Endothelial cell of umbilical vein (primary cell): ENCODE measurements at regions of chr6 and their contacts with region 1.

Region 1: DNA sequence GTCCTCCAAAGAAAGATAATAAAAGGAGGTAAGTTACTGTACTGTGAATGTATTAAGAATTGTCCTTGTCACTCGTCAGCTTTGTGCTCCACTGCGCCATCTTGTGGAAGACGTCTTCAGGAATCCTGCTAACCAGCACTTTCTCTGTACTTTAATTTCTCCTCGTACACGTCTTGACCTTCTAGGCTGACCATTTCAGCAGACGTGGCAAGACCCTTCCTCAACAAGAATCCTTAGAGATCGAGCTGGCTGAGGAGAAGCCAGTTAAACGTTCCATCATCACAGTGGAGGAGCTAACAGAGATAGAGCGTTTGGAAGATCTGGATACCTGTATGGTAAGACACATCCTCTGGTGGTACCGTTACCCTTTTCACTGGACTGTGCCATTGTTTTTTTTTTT is 95.5 kb upstream of the SCGN start:
- DNase-seq: peak; percentile 83
- H3K4me3 ChIP-seq: no peak overlapping the region
- H3K27ac ChIP-seq: no peak overlapping the region
- H3K4me1 ChIP-seq: no peaks in the 10 kb centered on the region
- H3K27me3 ChIP-seq: no peaks in the 10 kb centered on the region
- CTCF ChIP-seq: peak; percentile 73 to 85
- POLR2A ChIP-seq: no peak

Region 2: DNA sequence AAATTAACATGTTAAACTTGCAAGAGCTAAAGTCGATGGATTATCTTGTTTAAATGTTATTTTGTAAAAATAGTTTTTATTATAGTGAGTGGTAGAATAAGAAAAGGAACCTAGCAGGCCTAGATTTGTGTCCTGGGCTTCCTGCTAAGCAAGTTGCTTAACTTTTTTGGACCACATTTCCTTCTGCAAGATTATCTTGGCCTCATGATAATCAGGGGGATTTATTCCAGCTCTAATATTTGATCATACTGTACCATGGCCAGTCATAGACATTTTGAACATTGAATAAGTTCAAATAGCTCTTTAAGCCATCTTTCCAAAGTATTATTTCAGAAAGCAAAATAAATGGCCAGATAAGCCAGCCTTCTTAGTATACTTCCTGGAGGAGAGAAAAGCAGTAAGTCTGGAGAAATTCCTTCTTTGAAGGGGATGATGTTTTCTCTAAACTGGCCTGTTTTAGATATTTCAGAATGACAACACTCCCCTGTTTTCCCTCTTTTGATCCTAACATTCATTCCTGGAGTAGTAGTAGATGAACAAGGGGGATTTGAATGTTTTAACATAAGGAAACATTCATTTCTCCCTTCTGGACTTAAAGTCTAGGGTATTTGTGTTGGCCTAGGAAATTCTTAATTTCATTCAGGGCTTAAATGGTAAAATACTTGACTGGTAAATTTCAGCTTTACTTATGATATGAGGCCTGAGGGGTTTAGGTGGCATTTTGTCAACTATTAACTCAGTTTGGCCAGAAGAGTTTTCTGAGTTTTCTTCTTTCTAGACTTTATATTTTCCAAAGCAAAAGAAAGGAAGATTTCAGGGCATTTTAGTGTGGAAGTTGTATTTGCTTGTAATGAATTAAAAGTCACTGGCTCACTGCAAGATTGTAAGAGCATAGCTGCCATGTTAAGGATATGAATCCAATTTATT is 13.3 kb before region 1 on chr6:
- CTCF ChIA-PET with region 1: interaction called, 28 read pairs
- POLR2A ChIA-PET with region 1: no interaction called
- dilution Hi-C with region 1: no loop called
- intact Hi-C with region 1: no loop called
- DNase-seq: no peak
- H3K4me3 ChIP-seq: no peak overlapping the region
- H3K27ac ChIP-seq: no peak overlapping the region
- H3K4me1 ChIP-seq: no peaks in the 10 kb centered on the region
- H3K27me3 ChIP-seq: no peaks in the 10 kb centered on the region
- CTCF ChIP-seq: no peak
- POLR2A ChIP-seq: no peak

Region 3: GRCh38 chr6:25570578-25570977 is 14.1 kb after region 1 on chr6:
- CTCF ChIA-PET with region 1: interaction called, 62 read pairs
- POLR2A ChIA-PET with region 1: no interaction called
- dilution Hi-C with region 1: no loop called
- intact Hi-C with region 1: no loop called
- DNase-seq: peak; percentile 23
- H3K4me3 ChIP-seq: no peak overlapping the region
- H3K27ac ChIP-seq: no peak overlapping the region
- H3K4me1 ChIP-seq: peaks cover 10% of the 10 kb centered on the region
- H3K27me3 ChIP-seq: no peaks in the 10 kb centered on the region
- CTCF ChIP-seq: no peak
- POLR2A ChIP-seq: no peak

Region 4: DNA sequence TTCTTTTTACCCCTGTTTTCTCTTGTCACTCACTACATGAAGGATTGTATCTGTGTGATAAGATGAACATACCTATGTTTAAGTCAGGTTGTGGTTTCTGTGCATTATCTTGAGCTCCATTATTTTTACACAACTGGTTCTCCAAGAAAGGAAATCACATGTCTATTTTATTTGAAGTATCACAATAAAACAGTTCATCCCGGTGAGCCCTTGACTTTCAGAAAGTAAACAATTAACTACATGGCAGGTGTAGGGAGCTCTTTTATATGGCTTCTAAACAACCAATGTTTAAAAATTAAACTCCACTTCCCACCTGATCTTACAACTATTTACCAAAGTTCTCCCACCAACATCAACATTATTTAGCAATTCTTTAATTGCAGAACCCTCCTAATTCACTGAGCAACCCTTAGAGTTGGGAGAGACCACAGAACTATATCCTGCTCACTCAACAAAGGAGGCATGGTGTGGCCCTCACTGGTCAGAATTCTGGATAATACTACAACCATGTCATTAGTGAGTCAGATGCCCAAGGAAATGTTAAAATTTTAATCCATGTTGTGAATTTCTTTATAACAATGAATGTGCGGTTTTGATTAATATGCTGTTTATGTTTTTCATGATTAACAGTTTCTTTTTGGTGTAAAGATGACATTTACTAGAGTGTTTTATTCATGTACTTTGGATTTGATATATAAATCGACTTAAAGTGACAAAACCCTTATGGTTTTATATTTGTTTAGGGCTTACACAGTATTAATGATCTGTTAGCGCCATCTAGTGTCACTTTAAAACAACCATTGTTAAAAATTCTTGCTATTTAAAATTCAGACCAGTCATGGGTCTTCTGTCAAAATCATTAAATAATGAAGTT is 45.5 kb after region 1 on chr6:
- CTCF ChIA-PET with region 1: interaction called, 3 read pairs
- POLR2A ChIA-PET with region 1: no interaction called
- dilution Hi-C with region 1: no loop called
- intact Hi-C with region 1: loop called (anchors 2 kb)
- DNase-seq: peak; percentile 62
- H3K4me3 ChIP-seq: no peak overlapping the region
- H3K27ac ChIP-seq: no peak overlapping the region
- H3K4me1 ChIP-seq: no peaks in the 10 kb centered on the region
- H3K27me3 ChIP-seq: peaks cover 0 to 2% of the 10 kb centered on the region in 2 experiments
- CTCF ChIP-seq: peak; percentile 10 to 19
- POLR2A ChIP-seq: no peak